Dendritic cell treated with granulocyte-macrophage colony-stimulating factor and Interleukin-4, amounts not matched to agents 40 ng/mL and 50 ng/mL, for 4 days (primary cell): ENCODE measurements at regions of chr5 and their contacts with region 1.

Region 1: DNA sequence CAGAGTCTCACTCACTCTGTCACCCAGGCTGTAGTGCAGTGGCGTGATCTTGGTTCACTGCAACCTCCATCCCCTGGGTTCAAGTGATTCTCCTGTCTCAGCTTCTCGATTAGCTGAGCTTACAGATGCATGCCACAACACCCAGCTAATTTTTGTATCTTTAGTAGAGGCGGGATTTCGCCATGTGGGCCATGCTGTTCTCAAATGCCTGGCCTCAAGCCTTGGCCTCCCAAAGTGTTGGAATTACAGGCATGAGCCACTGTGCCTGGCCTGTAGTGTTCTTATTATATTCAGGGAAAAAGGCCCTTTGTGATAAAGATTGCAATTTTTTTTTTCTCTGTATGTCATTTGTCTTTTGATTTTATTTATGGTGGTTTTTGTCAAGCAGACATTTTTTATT is 24.0 kb upstream of the MCCC2 start:
- H3K4me3 Mint-ChIP-seq: no peak overlapping the region
- H3K27ac Mint-ChIP-seq: no peak overlapping the region
- H3K4me1 Mint-ChIP-seq: no peaks in the 10 kb centered on the region
- H3K27me3 Mint-ChIP-seq: no peaks in the 10 kb centered on the region

Region 2: DNA sequence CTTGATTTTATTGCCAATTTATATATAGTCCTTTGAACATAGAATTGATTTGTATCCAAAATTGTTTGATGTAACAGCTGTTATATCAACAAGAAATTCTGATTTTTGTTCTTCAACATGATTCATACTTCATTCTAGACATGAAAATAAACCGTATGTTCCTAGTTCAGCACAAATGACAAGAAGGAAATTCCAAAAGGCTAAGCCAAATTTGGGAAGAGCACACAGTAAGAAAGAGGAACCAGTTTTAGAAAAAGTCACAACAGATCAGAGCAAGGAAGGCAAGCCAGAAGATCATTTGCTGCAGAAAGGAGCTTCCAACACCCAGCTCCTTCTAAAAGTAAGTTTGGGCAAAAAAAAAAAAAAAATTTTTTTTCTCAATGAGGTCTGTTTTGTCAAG is 41.0 kb before region 1 on chr5:
- intact Hi-C with region 1: loop called (anchors 5 kb)
- H3K4me3 Mint-ChIP-seq: no peak overlapping the region
- H3K27ac Mint-ChIP-seq: peak overlapping the region; percentile 57
- H3K4me1 Mint-ChIP-seq: peaks cover 8% of the 10 kb centered on the region
- H3K27me3 Mint-ChIP-seq: no peaks in the 10 kb centered on the region

Region 3: DNA sequence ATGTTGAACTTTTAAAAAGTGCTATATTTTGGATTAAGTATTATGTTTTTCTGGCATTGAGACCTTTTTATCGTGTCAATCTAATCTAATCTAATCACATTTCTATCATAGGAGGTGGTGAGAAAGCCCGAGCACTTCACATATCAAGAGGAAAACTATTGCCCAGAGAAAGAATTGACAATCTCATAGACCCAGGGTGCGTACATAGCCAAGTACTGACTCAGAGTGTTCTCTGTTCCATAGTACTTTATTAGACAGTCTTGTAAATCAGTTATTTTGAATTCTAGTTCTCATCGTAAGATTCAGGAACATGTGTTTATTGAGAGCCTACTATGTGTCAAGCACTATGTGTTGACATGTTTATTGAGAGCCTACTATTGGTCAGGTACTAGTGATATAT is 33.0 kb after region 1 on chr5:
- intact Hi-C with region 1: no loop called
- H3K4me3 Mint-ChIP-seq: no peak overlapping the region
- H3K27ac Mint-ChIP-seq: no peak overlapping the region
- H3K4me1 Mint-ChIP-seq: no peaks in the 10 kb centered on the region
- H3K27me3 Mint-ChIP-seq: no peaks in the 10 kb centered on the region

Region 4: DNA sequence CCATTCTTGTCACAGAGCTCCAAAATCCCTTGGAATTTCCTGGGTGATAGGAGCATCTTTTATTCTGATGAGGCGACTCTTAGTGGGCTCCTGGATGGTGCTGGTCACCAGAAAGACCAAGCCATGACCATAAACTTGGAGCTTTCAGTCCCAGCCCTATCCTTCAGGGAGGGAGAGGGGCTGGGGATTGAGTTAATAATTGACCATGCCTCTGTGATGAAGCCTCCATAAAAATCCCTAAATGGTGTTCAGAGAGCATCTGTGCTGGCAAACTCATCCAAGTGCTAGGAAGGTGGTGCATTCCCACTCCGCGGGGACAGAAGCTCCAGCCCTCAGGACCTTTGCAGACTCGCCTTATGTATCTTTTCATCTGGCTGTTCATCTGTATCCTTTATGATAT is 52.6 kb after region 1 on chr5:
- intact Hi-C with region 1: no loop called
- H3K4me3 Mint-ChIP-seq: no peak overlapping the region
- H3K27ac Mint-ChIP-seq: no peak overlapping the region
- H3K4me1 Mint-ChIP-seq: no peaks in the 10 kb centered on the region
- H3K27me3 Mint-ChIP-seq: no peaks in the 10 kb centered on the region

Region 5: DNA sequence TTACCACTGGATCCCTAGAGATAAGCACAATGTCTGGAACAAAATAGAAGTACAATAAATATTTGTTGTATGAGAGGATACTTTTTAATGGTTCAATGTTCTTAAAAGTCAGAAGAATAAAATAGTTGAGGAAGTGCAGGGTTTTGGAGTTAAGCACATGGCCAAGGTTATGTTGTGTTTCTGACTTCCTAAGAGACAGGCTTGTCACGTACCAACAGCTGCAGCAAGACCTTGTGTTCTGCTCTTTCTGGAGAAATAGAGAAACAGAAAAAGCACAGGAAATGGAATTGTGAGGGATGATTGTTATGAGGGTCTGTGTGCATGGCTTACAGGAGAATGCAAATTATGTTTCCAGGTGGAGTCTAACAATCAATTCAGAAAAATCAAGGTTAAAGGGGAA is 168.8 kb after region 1 on chr5:
- intact Hi-C with region 1: no loop called
- H3K4me3 Mint-ChIP-seq: no peak overlapping the region
- H3K27ac Mint-ChIP-seq: no peak overlapping the region
- H3K4me1 Mint-ChIP-seq: no peaks in the 10 kb centered on the region
- H3K27me3 Mint-ChIP-seq: peaks cover 4% of the 10 kb centered on the region